ENCODE measurements at regions of chr10 and their contacts with region 1.

Region 1: GRCh38 chr10:26468700-26469099 is 30.6 kb downstream of the APBB1IP start:
- DNase-seq: peak; percentile 32 to 51
- H3K4me3 ChIP-seq: no peak overlapping the region
- H3K4me3 Mint-ChIP-seq: peak overlapping the region; percentile 31
- H3K27ac Mint-ChIP-seq: peak overlapping the region; percentile 82
- H3K4me1 ChIP-seq: peaks cover 22% of the 10 kb centered on the region
- H3K4me1 Mint-ChIP-seq: peaks cover 24% of the 10 kb centered on the region
- H3K27me3 ChIP-seq: no peaks in the 10 kb centered on the region
- H3K27me3 Mint-ChIP-seq: no peaks in the 10 kb centered on the region
- CTCF ChIP-seq: no peak

Region 2: GRCh38 chr10:26341701-26342100 is 127.0 kb before region 1 on chr10:
- CTCF ChIA-PET with region 1: no interaction called
- POLR2A ChIA-PET with region 1: no interaction called
- intact Hi-C with region 1: loop called (anchors 5 kb)
- DNase-seq: no peak
- H3K4me3 ChIP-seq: no peak overlapping the region
- H3K4me3 Mint-ChIP-seq: no peak overlapping the region
- H3K27ac Mint-ChIP-seq: no peak overlapping the region
- H3K4me1 ChIP-seq: peaks cover 2% of the 10 kb centered on the region
- H3K4me1 Mint-ChIP-seq: peaks cover 11% of the 10 kb centered on the region
- H3K27me3 ChIP-seq: no peaks in the 10 kb centered on the region
- H3K27me3 Mint-ChIP-seq: no peaks in the 10 kb centered on the region
- CTCF ChIP-seq: no peak

Region 3: DNA sequence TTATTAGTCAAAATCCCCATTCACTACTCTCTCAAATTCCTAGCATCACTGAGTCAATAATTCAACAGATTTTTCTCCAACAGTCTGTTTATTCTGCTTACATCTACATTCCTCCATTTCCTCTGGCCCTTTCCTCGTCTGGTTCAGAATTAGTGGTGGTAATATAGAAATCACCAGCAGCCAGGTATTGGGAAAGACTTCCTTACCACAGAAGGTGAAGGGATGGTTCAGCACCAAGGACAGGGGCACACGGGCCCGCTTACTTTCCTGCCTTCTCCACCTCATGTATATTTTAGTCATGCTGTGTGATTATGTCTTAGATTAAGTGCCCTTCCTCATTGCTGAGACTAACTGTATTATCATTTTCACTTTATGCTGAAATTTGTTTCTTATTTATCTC is 100.9 kb before region 1 on chr10:
- CTCF ChIA-PET with region 1: no interaction called
- POLR2A ChIA-PET with region 1: no interaction called
- intact Hi-C with region 1: no loop called
- DNase-seq: peak; percentile 82 to 89
- H3K4me3 ChIP-seq: no peak overlapping the region
- H3K4me3 Mint-ChIP-seq: no peak overlapping the region
- H3K27ac Mint-ChIP-seq: no peak overlapping the region
- H3K4me1 ChIP-seq: no peaks in the 10 kb centered on the region; the same call in 1 of the 2 replicates
- H3K4me1 Mint-ChIP-seq: peaks cover 9% of the 10 kb centered on the region
- H3K27me3 ChIP-seq: no peaks in the 10 kb centered on the region
- H3K27me3 Mint-ChIP-seq: no peaks in the 10 kb centered on the region
- CTCF ChIP-seq: no peak

Region 4: DNA sequence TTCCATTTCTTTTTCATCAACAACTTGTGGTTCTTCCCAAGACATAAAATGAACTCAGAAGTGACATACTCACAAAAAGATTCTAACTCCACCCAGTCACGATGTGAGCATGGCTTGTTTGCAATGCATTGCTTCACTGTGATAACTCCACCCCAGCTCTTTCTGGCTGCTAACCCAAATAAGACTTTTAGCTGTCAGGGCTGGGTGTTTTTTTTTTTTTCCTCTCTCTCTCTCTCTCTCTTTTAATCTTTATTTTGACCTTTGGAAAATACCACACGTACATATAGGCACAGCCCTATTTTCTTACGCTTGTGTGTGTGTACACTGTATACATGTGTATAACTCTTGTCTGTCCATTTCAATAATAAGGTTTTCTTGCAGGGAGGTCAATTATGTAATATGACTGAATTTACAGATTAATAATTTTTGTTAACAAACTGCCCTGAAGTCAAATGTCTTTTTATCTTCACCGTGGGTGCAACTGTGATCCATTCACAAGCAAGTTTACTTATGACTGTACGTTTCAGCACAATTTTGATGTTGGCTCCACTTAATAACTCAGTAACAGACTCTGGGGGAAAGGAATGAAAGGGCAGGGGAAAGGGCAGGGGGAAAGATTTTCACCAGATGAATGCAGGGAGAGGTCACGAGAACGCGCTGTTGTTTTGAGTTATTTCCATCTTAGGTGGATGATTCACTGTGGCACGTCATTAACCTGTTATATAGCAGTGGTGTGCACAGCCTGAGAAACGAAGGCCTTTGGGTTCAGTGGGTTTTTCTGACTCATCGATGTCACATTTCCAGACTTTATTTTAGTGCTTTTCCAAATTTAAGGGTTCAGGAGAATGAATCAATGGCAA is 18.5 kb after region 1 on chr10:
- CTCF ChIA-PET with region 1: no interaction called
- POLR2A ChIA-PET with region 1: no interaction called
- intact Hi-C with region 1: loop called (anchors 2 kb)
- DNase-seq: peak; percentile 57 to 58
- H3K4me3 ChIP-seq: no peak overlapping the region
- H3K4me3 Mint-ChIP-seq: peak overlapping the region; percentile 10
- H3K27ac Mint-ChIP-seq: peak overlapping the region; percentile 26
- H3K4me1 ChIP-seq: peaks cover 33% of the 10 kb centered on the region
- H3K4me1 Mint-ChIP-seq: peaks cover 37% of the 10 kb centered on the region
- H3K27me3 ChIP-seq: no peaks in the 10 kb centered on the region
- H3K27me3 Mint-ChIP-seq: no peaks in the 10 kb centered on the region
- CTCF ChIP-seq: no peak

Region 5: GRCh38 chr10:26524161-26524831 is 55.6 kb after region 1 on chr10:
- CTCF ChIA-PET with region 1: interaction called, 4 read pairs
- POLR2A ChIA-PET with region 1: no interaction called
- intact Hi-C with region 1: loop called (anchors 1 kb)
- DNase-seq: peak; percentile 67 to 77
- H3K4me3 ChIP-seq: no peak overlapping the region
- H3K4me3 Mint-ChIP-seq: peak overlapping the region; percentile 35
- H3K27ac Mint-ChIP-seq: peak overlapping the region; percentile 99
- H3K4me1 ChIP-seq: peaks cover 26% of the 10 kb centered on the region
- H3K4me1 Mint-ChIP-seq: peaks cover 19% of the 10 kb centered on the region
- H3K27me3 ChIP-seq: no peaks in the 10 kb centered on the region
- H3K27me3 Mint-ChIP-seq: no peaks in the 10 kb centered on the region
- CTCF ChIP-seq: no peak